ENCODE measurements at regions of chr4 and their contacts with region 1.

Region 1: GRCh38 chr4:113355550-113356371 is 306.3 kb downstream of the ANK2 start:
- DNase-seq: peak; percentile 98
- ATAC-seq: peak; percentile 98
- H3K4me3 ChIP-seq: peak overlapping the region; percentile 8; the same call in 1 of the 2 replicates
- H3K27ac ChIP-seq: peak overlapping the region; percentile 64
- H3K4me1 ChIP-seq: peaks cover 14% of the 10 kb centered on the region
- H3K27me3 ChIP-seq: no peaks in the 10 kb centered on the region
- CTCF ChIP-seq: peak; percentile 43 to 65 (median 45); a peak in 5 of 6 replicates
- EP300 ChIP-seq: peak; percentile 70 to 79
- POLR2A ChIP-seq: no peak
- RAD21 ChIP-seq: peak; percentile 36; the same call in 1 of the 2 replicates

Region 2: GRCh38 chr4:113316879-113317278 is 38.9 kb before region 1 on chr4:
- CTCF ChIA-PET with region 1: interaction called, 14 read pairs
- POLR2A ChIA-PET with region 1: no interaction called
- RAD21 ChIA-PET with region 1: interaction called, 14 read pairs
- SMC1A ChIA-PET with region 1: interaction called, 30 read pairs
- in situ Hi-C with region 1: no loop called
- intact Hi-C with region 1: loop called (anchors 5 kb)
- DNase-seq: peak; percentile 75
- ATAC-seq: peak; percentile 98
- H3K4me3 ChIP-seq: no peak overlapping the region; the same call in 1 of the 2 replicates
- H3K27ac ChIP-seq: 0 out of 2 replicates have a peak overlapping the region, but pooled peaks have one; percentile 4
- H3K4me1 ChIP-seq: peaks cover 7% of the 10 kb centered on the region; the same call in 1 of the 2 replicates
- H3K27me3 ChIP-seq: no peaks in the 10 kb centered on the region
- CTCF ChIP-seq: no peak
- EP300 ChIP-seq: no peak
- POLR2A ChIP-seq: no peak
- RAD21 ChIP-seq: no peak

Region 3: DNA sequence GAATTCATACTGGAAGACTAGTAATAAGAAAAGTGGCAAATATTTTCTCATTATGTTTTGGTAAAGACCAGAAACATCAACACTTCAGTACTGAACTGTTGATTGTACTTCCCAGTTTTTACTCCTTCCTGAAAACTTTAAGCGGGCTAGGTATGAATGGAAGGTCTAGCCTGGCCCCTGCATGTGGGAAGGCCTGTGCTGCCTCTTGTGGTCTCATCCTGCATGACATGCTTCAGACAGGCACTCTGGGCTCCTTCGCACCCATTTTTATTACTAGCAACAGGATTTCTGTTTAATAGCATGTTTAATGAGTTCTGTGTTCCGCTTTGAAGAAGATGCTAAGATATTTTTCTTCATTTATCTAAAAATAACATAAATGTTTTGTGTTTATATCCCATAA is 27.2 kb before region 1 on chr4:
- CTCF ChIA-PET with region 1: interaction called, 3 read pairs
- POLR2A ChIA-PET with region 1: interaction called, 3 read pairs
- RAD21 ChIA-PET with region 1: interaction called, 4 read pairs
- SMC1A ChIA-PET with region 1: interaction called, 19 read pairs
- in situ Hi-C with region 1: no loop called
- intact Hi-C with region 1: no loop called
- DNase-seq: no peak
- ATAC-seq: peak; percentile 85
- H3K4me3 ChIP-seq: no peak overlapping the region
- H3K27ac ChIP-seq: no peak overlapping the region
- H3K4me1 ChIP-seq: no peaks in the 10 kb centered on the region
- H3K27me3 ChIP-seq: no peaks in the 10 kb centered on the region
- CTCF ChIP-seq: peak; percentile 30 to 55 (median 44); a peak in 4 of 6 replicates
- EP300 ChIP-seq: no peak
- POLR2A ChIP-seq: no peak
- RAD21 ChIP-seq: peak; percentile 29; the same call in 1 of the 2 replicates

Region 4: DNA sequence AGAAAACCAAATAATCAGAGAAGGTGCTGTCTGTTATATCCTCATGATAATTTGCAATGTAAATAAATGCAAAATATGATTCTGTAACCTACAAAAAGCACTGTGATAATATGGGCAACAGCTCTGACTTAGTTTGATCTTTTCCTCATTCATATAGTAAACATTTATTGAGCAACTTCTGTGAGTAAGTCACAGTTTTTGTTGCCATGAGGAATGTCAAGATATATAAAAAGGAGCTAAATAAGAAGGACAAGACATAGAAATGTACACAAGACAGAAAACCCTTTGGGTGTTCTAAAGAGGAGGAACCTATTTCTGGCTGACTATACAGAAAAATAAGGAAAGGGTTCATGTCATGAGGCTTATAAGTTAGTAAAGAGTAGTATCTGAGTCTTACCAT is 579.4 kb after region 1 on chr4:
- CTCF ChIA-PET with region 1: no interaction called
- POLR2A ChIA-PET with region 1: no interaction called
- RAD21 ChIA-PET with region 1: no interaction called
- SMC1A ChIA-PET with region 1: no interaction called
- in situ Hi-C with region 1: no loop called
- intact Hi-C with region 1: no loop called
- DNase-seq: no peak
- ATAC-seq: no peak
- H3K4me3 ChIP-seq: no peak overlapping the region
- H3K27ac ChIP-seq: no peak overlapping the region
- H3K4me1 ChIP-seq: no peaks in the 10 kb centered on the region
- H3K27me3 ChIP-seq: no peaks in the 10 kb centered on the region
- CTCF ChIP-seq: no peak
- EP300 ChIP-seq: no peak
- POLR2A ChIP-seq: no peak
- RAD21 ChIP-seq: no peak

Measured in GM12878 (cell line).